Motor neuron (in vitro differentiated cells): ENCODE measurements at regions of chr6 and their contacts with region 1.

Region 1: GRCh38 chr6:31665501-31666336 is at the start of gene CSNK2B:
- ATAC-seq: peak; percentile 69 to 89 (median 83)
- H3K4me3 ChIP-seq: peak within 1 kb of the TSS; percentile 60 to 93 (median 84)
- H3K27ac ChIP-seq: peak within 1 kb of the TSS; percentile 93 to 96
- H3K4me1 ChIP-seq: peaks cover 11 to 19% of the 10 kb centered on the region in 2 donors
- total RNA-seq, gene CSNK2B: 112 to 225 (median 167) TPM

Region 2: GRCh38 chr6:31580807-31581433 is 84.8 kb before region 1 on chr6:
- in situ Hi-C with region 1: no loop called
- ATAC-seq: peak; percentile 97 to 99 (median 99)
- H3K4me3 ChIP-seq: peak overlapping the region; percentile 40 to 51 (median 43)
- H3K27ac ChIP-seq: no peak overlapping the region
- H3K4me1 ChIP-seq: peaks cover 0 to 6% of the 10 kb centered on the region in 2 donors

Region 3: DNA sequence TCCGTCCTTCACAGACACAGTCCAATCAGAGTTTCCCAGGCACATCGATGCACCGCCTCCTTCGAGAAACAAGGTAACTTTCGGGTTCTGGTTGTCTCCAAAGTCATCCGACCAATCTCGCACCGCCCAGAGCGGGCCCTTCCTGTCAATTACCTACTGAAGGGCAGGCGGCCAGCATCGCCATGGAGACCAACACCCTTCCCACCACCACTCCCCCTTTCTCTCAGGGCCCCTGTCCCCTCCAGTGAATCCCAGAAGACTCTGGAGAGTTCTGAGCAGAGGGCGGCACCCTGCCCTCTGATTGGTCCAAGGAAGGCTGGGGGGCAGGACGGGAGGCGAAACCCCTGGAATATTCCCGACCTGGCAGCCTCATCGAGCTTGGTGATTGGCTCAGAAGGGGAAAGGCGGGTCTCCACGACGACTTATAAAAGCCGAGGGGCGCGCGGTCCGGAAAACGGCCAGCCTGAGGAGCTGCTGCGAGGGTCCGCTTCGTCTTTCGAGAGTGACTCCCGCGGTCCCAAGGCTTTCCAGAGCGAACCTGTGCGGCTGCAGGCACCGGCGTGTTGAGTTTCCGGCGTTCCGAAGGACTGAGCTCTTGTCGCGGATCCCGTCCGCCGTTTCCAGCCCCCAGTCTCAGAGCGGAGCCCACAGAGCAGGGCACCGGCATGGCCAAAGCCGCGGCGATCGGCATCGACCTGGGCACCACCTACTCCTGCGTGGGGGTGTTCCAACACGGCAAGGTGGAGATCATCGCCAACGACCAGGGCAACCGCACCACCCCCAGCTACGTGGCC is 161.8 kb after region 1 on chr6 and contains the start of gene HSPA1B:
- in situ Hi-C with region 1: loop called in 1 of 9 experiments (anchors 25 kb)
- ATAC-seq: peak; percentile 61 to 86 (median 80)
- H3K4me3 ChIP-seq: peak within 1 kb of the TSS; percentile 68 to 72 (median 70)
- H3K27ac ChIP-seq: peak within 1 kb of the TSS; percentile 74 to 86
- H3K4me1 ChIP-seq: peaks cover 14 to 19% of the 10 kb centered on the region in 2 donors
- total RNA-seq, gene HSPA1B: 68.6 to 489 (median 130) TPM

Region 4: DNA sequence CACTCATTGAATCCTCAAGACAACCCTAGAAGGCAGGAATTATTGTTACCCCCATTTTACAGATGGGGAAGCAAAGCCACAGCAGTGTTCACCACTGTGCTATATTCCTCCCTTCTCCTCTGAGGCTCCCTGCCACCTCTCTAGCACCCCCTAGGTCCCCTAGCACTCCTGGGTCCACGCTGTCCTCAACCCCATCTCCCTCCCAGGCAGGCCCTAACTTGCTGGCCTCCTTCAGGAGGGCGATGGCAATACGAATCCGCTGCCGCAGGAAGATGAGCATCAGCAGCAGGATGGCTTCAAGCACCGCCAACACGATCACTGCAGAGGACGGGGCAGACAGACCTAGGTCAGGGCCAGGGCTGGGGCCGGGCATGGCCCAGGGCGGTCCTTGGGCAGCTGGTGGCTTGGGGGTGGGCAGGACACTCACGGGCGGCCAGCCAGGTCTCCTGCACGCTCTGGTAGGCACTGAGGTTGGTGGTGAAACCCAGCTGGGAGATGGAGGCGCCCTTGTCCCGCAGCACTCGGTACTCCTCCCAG is 204.7 kb after region 1 on chr6:
- in situ Hi-C with region 1: no loop called
- ATAC-seq: peak in 4 of 8 experiments; percentile 7 to 37 (median 24)
- H3K4me3 ChIP-seq: no peak overlapping the region
- H3K27ac ChIP-seq: no peak overlapping the region
- H3K4me1 ChIP-seq: no peaks in the 10 kb centered on the region